ENCODE measurements at regions of chr2 and their contacts with region 1.

Region 1: DNA sequence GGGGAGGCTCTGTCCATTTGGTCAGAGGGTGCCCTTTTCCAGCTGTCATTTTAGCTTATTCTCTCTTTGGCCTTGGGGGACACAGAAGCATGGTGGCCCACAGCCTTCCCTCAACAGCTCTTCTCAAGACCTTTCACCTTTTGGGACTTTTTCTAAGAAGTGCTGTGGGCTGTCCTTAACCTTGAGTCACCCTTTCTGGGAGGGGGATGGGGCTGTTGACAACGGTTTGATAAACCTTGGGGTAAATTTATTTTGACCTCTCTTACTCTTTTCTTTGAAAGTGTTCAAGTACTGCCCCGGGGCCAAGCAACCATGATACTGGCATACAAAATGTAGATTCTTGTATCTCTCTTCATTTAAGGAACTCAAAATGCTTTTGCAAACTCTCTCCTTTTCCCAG is 13.7 kb downstream of the IGFBP5 start:
- DNase-seq: no peak
- ATAC-seq: no peak
- H3K4me3 ChIP-seq: no peak overlapping the region
- H3K4me3 Mint-ChIP-seq: no peak overlapping the region
- H3K27ac ChIP-seq: no peak overlapping the region
- H3K27ac Mint-ChIP-seq: no peak overlapping the region
- H3K4me1 ChIP-seq: no peaks in the 10 kb centered on the region
- H3K4me1 Mint-ChIP-seq: peaks cover 3% of the 10 kb centered on the region
- H3K27me3 ChIP-seq: peaks cover 0 to 8% of the 10 kb centered on the region in 2 experiments
- H3K27me3 Mint-ChIP-seq: peaks cover 26% of the 10 kb centered on the region
- CTCF ChIP-seq: no peak

Region 2: DNA sequence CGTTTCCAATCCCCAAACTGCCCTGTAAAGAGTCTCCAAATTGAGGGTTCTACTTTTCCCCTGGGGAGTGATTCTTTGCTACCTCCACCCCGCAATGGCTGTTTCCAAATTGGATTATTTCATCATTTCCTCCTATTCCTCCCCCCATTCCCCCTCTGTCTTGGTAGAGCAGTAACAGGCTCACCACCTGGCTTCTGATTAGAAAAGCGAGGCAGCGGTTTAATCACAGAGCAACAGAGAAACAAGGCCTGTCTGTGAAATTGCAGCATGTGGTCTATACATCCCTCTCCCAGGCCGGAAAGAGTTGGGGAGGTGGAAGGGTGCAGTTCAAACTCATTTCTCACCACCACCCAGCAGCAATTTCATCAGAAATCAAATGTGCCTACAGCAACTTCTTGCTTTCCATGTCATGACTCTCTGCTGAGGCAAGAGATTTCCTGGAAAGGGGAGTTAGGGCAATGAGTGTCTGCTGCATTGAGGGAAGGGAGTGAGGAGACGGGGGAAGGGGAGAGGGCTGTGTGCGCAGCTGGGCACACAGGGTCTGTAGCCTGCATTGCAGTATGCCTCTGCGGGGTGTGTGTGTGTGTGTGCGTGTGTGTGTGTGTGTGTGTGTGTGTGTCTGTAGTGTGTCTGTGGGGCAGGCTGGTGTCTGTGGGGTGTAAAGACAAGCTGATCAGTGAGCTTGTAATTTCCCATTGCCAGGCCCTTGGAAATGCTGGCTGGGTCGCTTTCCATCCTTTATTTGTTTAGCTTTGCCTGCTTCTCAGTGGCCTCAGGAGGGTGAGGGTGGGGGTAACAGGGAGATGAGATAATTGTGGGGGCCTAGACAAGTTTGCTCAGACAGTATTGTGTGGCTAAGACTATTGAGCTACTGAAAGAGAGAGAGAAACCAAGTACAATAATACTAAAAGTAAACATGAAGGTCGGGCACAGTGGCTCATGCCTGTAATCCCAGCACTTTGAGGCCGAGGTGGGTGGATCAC is 62.0 kb before region 1 on chr2:
- CTCF ChIA-PET with region 1: no interaction called
- POLR2A ChIA-PET with region 1: no interaction called
- intact Hi-C with region 1: no loop called
- DNase-seq: no peak
- ATAC-seq: no peak
- H3K4me3 ChIP-seq: no peak overlapping the region
- H3K4me3 Mint-ChIP-seq: no peak overlapping the region
- H3K27ac ChIP-seq: no peak overlapping the region
- H3K27ac Mint-ChIP-seq: peak overlapping the region; percentile 71
- H3K4me1 ChIP-seq: no peaks in the 10 kb centered on the region
- H3K4me1 Mint-ChIP-seq: peaks cover 10% of the 10 kb centered on the region
- H3K27me3 ChIP-seq: no peaks in the 10 kb centered on the region
- H3K27me3 Mint-ChIP-seq: no peaks in the 10 kb centered on the region
- CTCF ChIP-seq: no peak

Region 3: DNA sequence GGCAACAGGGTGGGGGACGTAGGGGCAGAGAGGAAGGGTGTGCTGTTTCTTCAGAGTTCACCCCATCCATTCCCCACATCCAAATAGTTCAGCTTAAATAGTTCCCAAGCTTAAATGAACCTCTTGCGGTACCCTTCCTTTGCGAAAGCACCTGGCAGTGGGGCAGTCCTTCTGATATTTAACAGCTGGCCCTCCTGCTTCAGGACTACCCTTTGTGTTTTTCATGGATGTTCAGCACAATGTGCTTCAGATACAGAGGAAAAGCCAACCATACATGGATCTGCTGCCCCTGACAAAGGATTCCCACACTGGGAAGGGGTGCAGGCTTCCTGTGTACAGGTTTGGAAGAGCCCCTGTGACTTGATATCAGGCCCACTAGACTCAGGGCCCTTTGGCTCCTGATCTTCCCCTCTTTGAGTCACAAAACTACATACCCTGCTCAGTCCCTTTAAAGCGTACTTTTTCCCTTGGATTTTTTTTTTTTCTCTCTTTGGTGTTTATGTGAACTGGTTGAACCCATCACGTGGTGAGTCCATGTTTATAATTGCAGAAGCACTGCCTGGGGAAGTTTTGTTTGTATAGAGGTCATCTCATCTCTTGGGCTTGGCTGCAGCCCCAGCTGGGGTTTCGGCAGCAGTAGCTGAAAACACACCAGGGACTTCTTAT is 59.0 kb after region 1 on chr2:
- CTCF ChIA-PET with region 1: no interaction called
- POLR2A ChIA-PET with region 1: no interaction called
- intact Hi-C with region 1: no loop called
- DNase-seq: no peak
- ATAC-seq: no peak
- H3K4me3 ChIP-seq: no peak overlapping the region
- H3K4me3 Mint-ChIP-seq: no peak overlapping the region
- H3K27ac ChIP-seq: no peak overlapping the region
- H3K27ac Mint-ChIP-seq: no peak overlapping the region
- H3K4me1 ChIP-seq: no peaks in the 10 kb centered on the region
- H3K4me1 Mint-ChIP-seq: no peaks in the 10 kb centered on the region
- H3K27me3 ChIP-seq: no peaks in the 10 kb centered on the region
- H3K27me3 Mint-ChIP-seq: peaks cover 3% of the 10 kb centered on the region
- CTCF ChIP-seq: no peak

Region 4: DNA sequence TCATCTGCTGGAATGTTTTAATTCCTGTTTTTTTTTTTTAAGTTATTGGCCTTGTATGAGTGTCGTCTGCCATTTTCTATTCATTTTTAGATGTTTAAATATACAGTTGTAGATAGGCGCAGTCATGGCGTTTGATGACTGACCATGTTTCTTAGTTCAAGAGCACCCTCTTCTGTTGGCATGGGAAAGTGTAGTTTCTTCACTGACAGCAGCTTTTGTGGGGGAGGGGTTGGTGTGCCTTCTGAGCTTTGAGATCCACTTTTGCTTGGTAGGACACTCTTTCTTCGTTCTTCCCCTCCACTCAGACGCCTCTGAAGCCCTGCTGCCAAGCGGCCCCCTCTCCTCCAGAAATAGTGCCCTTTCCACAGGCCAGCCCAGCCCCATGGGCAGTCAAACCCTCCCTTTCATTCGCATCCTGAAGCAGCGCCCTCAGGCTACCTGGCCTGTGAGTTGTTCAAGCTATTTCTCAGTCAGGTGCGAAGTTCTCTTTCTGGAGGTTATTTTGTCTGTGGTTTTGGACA is 829.1 kb after region 1 on chr2:
- CTCF ChIA-PET with region 1: interaction called, 3 read pairs
- POLR2A ChIA-PET with region 1: no interaction called
- intact Hi-C with region 1: loop called in 1 of 2 experiments (anchors 1 kb)
- DNase-seq: peak in 4 of 9 experiments; percentile 19 to 69 (median 43)
- ATAC-seq: peak; percentile 58
- H3K4me3 ChIP-seq: no peak overlapping the region
- H3K4me3 Mint-ChIP-seq: no peak overlapping the region
- H3K27ac ChIP-seq: no peak overlapping the region
- H3K27ac Mint-ChIP-seq: no peak overlapping the region
- H3K4me1 ChIP-seq: no peaks in the 10 kb centered on the region
- H3K4me1 Mint-ChIP-seq: peaks cover 2% of the 10 kb centered on the region
- H3K27me3 ChIP-seq: no peaks in the 10 kb centered on the region
- H3K27me3 Mint-ChIP-seq: peaks cover 3% of the 10 kb centered on the region
- CTCF ChIP-seq: peak; percentile 26